GM12878 (cell line): ENCODE measurements at regions of chr7 and their contacts with region 1.

Region 1: GRCh38 chr7:29113384-29114103 is 32.8 kb downstream of the CPVL start:
- DNase-seq: no peak
- ATAC-seq: peak; percentile 50
- H3K4me3 ChIP-seq: no peak overlapping the region
- H3K27ac ChIP-seq: no peak overlapping the region
- H3K4me1 ChIP-seq: no peaks in the 10 kb centered on the region
- H3K27me3 ChIP-seq: peaks cover 1 to 3% of the 10 kb centered on the region in 2 experiments; a peak in 2 of 4 replicates
- CTCF ChIP-seq: peak in 2 of 3 experiments; percentile 27 to 35; a peak in 2 of 6 replicates
- EP300 ChIP-seq: no peak
- POLR2A ChIP-seq: no peak
- RAD21 ChIP-seq: peak; percentile 16; the same call in 1 of the 2 replicates

Region 2: DNA sequence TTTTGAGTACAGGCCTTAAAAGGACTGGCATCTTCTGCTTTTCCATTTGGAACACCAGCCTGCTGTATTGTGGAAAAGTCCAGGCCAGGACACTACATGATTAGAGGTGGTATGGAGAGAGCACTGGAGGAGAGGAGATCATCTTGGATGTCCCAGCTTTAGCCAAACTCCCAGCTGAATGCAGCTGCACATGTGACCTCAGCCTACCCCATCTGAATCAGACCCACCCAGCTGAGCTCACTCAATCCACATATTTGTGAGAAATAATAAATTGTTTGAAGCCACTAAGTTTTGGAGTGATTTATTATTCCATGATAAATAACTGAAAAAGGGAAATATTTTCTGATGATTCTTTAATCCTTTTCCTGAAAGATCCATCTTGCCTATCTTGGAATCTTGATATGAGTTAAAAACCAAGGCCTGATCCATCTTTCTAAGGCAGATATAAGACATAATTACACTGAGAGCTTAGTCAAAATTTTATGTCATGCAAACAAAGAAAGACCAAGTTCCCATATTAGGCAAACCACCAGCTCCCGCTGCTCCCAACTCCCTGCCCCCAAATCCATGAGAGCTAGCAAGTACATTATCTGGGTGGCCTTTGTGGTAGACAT is 100.4 kb before region 1 on chr7:
- CTCF ChIA-PET with region 1: no interaction called
- POLR2A ChIA-PET with region 1: no interaction called
- RAD21 ChIA-PET with region 1: no interaction called
- SMC1A ChIA-PET with region 1: no interaction called
- in situ Hi-C with region 1: no loop called
- intact Hi-C with region 1: no loop called
- DNase-seq: no peak
- ATAC-seq: no peak
- H3K4me3 ChIP-seq: no peak overlapping the region
- H3K27ac ChIP-seq: no peak overlapping the region
- H3K4me1 ChIP-seq: no peaks in the 10 kb centered on the region
- H3K27me3 ChIP-seq: no peaks in the 10 kb centered on the region; a peak in 1 of 4 replicates
- CTCF ChIP-seq: no peak
- EP300 ChIP-seq: no peak
- POLR2A ChIP-seq: no peak
- RAD21 ChIP-seq: no peak

Region 3: GRCh38 chr7:29345600-29345999 is 232.1 kb after region 1 on chr7:
- CTCF ChIA-PET with region 1: no interaction called
- POLR2A ChIA-PET with region 1: no interaction called
- RAD21 ChIA-PET with region 1: no interaction called
- SMC1A ChIA-PET with region 1: no interaction called
- in situ Hi-C with region 1: no loop called
- intact Hi-C with region 1: loop called (anchors 5 kb)
- DNase-seq: no peak
- ATAC-seq: peak; percentile 71
- H3K4me3 ChIP-seq: no peak overlapping the region
- H3K27ac ChIP-seq: no peak overlapping the region
- H3K4me1 ChIP-seq: no peaks in the 10 kb centered on the region
- H3K27me3 ChIP-seq: no peaks in the 10 kb centered on the region
- CTCF ChIP-seq: peak in 2 of 3 experiments; percentile 33 to 44; a peak in 3 of 6 replicates
- EP300 ChIP-seq: no peak
- POLR2A ChIP-seq: no peak
- RAD21 ChIP-seq: no peak